ENCODE measurements at regions of chr10 and their contacts with region 1.

Region 1: DNA sequence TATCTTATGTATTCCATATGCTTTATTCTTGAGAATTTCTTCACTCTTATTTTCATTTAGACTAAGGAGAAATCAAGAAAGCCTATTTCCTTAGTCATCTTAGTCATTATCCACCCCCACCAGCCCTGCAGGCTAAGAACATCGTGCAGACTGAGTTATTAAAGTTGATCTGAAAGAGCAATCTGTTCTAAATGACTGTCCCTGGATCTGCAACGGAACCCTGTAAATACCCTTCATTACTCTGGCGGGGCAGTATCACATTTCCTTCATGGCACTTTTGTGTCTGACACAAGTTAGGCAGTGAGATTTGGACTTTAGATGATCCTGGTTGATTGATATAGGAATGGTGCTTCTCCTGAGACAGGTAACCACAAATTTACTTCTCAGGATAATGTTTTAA is 3.5 kb upstream of the MYPN start:
- DNase-seq: peak; percentile 88
- H3K4me3 ChIP-seq: peak overlapping the region; percentile 74
- H3K27ac ChIP-seq: peak overlapping the region; percentile 78
- H3K4me1 ChIP-seq: peaks cover 87% of the 10 kb centered on the region
- H3K27me3 ChIP-seq: no peaks in the 10 kb centered on the region

Region 2: DNA sequence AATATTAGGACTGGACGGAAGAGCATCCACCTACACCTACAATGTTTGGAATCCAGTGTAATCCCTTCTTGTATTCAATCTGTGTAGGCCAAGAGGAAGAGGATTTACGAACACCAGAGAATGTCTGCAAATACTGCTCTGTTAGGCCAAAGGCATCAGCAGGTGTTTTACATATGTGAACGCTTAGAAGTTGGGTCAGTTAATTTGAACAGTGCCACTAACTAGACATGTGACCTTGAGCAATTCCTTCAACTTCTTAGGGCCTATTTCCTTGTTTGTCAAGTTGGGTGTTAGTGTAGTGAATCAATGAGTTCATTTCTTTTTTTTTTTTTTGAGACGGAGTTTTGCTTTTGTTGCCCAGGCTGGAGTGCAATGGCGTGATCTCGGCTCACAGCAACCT is 38.9 kb after region 1 on chr10:
- in situ Hi-C with region 1: loop called (anchors 5 kb)
- DNase-seq: no peak
- H3K4me3 ChIP-seq: no peak overlapping the region
- H3K27ac ChIP-seq: no peak overlapping the region
- H3K4me1 ChIP-seq: peaks cover 7% of the 10 kb centered on the region
- H3K27me3 ChIP-seq: no peaks in the 10 kb centered on the region

Measured in GM23248 (cell line).